Panc1 (cell line): ENCODE measurements at regions of chr17 and their contacts with region 1.

Region 1: GRCh38 chr17:38654411-38655398 is 20.1 kb downstream of the EPOP start:
- DNase-seq: no peak
- ATAC-seq: no peak
- H3K4me3 ChIP-seq: no peak overlapping the region
- H3K27ac ChIP-seq: no peak overlapping the region
- H3K4me1 ChIP-seq: no peaks in the 10 kb centered on the region
- H3K27me3 ChIP-seq: no peaks in the 10 kb centered on the region
- CTCF ChIP-seq: no peak

Region 2: GRCh38 chr17:38550661-38551060 is 104.0 kb before region 1 on chr17:
- CTCF ChIA-PET with region 1: no interaction called
- POLR2A ChIA-PET with region 1: interaction called, 25 read pairs
- in situ Hi-C with region 1: no loop called
- intact Hi-C with region 1: no loop called
- DNase-seq: no peak
- ATAC-seq: no peak
- H3K4me3 ChIP-seq: no peak overlapping the region
- H3K27ac ChIP-seq: no peak overlapping the region
- H3K4me1 ChIP-seq: no peaks in the 10 kb centered on the region
- H3K27me3 ChIP-seq: no peaks in the 10 kb centered on the region
- CTCF ChIP-seq: no peak

Region 3: GRCh38 chr17:38637951-38638350 is 16.8 kb before region 1 on chr17:
- CTCF ChIA-PET with region 1: interaction called, 5 read pairs
- POLR2A ChIA-PET with region 1: interaction called, 13 read pairs
- in situ Hi-C with region 1: no loop called
- intact Hi-C with region 1: no loop called
- DNase-seq: no peak
- ATAC-seq: no peak
- H3K4me3 ChIP-seq: no peak overlapping the region
- H3K27ac ChIP-seq: no peak overlapping the region
- H3K4me1 ChIP-seq: no peaks in the 10 kb centered on the region
- H3K27me3 ChIP-seq: no peaks in the 10 kb centered on the region
- CTCF ChIP-seq: no peak

Region 4: GRCh38 chr17:38799378-38800236 is 144.9 kb after region 1 on chr17 and contains the start of gene PIP4K2B:
- CTCF ChIA-PET with region 1: no interaction called
- POLR2A ChIA-PET with region 1: no interaction called
- in situ Hi-C with region 1: no loop called
- intact Hi-C with region 1: no loop called
- DNase-seq: peak; percentile 52
- ATAC-seq: peak; percentile 97
- H3K4me3 ChIP-seq: peak within 1 kb of the TSS; percentile 70 to 78
- H3K27ac ChIP-seq: peak within 1 kb of the TSS; percentile 86
- H3K4me1 ChIP-seq: peaks cover 17% of the 10 kb centered on the region
- H3K27me3 ChIP-seq: no peaks in the 10 kb centered on the region
- CTCF ChIP-seq: no peak
- total RNA-seq, gene PIP4K2B: 42.3 TPM